ENCODE measurements at regions of chr6 and their contacts with region 1.

Region 1: DNA sequence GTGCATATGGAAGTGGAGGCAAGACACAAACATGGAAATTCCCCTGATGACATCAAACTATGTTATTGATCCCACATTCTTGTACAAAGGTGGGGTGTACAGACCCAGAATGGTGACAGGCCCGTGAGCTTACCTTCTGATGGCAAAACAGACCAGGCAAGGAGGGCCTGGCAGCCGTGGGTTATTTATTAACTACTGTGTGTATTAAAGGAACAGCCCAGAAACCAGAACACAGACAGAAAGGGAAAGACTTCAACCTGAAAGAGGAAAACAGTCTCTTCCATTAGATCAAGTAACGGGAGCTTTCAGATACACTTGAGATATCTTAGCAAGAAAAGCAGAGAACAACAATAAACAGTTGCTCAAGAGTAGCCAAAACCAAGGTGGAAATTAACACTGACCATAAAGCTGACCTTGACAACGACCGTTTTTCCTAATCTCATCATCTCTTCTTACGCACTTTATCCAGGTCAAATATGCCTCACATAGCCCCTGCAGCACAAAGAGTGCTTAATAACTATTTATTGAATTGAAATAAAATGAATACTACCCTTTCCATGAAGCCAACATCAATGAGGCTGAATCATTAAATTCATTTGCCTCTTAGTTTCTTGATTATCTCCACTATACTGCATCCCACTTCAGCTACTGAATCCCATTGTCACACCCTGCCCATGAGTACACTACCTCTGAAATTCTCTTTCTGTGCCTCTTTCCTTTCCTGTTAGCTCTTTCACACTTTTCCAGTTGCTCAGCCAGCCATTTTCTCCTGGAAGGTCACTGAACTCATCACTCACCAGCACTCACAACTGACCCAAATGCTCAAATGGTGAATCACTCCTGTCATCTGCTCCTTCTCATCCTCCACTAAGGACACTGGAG is 67.4 kb downstream of the MOXD1 start:
- DNase-seq: peak; percentile 15
- H3K4me3 ChIP-seq: no peak overlapping the region
- H3K27ac ChIP-seq: no peak overlapping the region
- H3K4me1 ChIP-seq: peaks cover 0 to 5% (median 1%) of the 10 kb centered on the region in 4 donors
- H3K27me3 ChIP-seq: no peaks in the 10 kb centered on the region
- CTCF ChIP-seq: no peak
- EP300 ChIP-seq: no peak
- POLR2A ChIP-seq: no peak

Region 2: GRCh38 chr6:132320007-132320406 is 13.9 kb before region 1 on chr6:
- in situ Hi-C with region 1: no loop called
- intact Hi-C with region 1: loop called (anchors 1 kb)
- DNase-seq: no peak
- H3K4me3 ChIP-seq: no peak overlapping the region
- H3K27ac ChIP-seq: no peak overlapping the region
- H3K4me1 ChIP-seq: no peaks in the 10 kb centered on the region
- H3K27me3 ChIP-seq: no peaks in the 10 kb centered on the region
- CTCF ChIP-seq: no peak
- EP300 ChIP-seq: no peak
- POLR2A ChIP-seq: no peak

Measured in transverse colon (tissue), 4 donors.